ENCODE measurements at regions of chr9 and their contacts with region 1.

Region 1: DNA sequence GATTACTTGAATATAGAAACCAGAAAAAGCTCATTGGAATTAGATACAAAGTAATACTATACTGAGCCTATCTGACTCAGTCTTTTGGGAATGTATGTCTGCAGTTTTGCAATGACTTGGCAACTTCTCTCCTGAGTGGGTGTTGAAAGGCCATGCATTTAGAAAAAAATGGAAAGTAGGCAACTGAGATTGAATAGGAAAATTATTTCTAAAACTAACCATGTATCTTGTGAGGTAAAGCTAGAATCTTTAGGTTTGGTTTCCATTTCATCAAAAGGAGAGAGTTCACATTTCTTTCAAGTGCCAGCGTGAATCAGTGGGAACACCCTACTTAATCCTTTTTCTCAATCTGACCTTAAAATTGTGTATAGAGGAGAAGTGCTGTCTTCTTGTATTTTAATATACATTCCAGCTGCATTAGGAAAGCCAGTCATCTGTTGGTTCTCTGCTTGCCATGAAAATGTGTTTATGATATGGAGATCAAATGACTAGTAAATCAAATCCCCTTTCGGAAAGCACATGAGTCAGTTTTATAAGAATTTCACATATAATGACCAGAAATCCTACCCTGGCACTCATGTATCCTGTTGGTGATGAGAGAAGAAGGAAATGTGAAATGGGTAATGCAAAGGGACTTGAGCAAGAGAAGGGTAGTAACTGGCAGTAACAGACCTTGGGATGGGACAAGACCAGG is 30.4 kb downstream of the NFX1 start:
- DNase-seq: peak; percentile 59 to 81
- ATAC-seq: peak; percentile 90 to 91
- H3K4me3 ChIP-seq: no peak overlapping the region
- H3K27ac ChIP-seq: peak overlapping the region; percentile 80 to 87
- H3K4me1 ChIP-seq: peaks cover 33% of the 10 kb centered on the region
- CTCF ChIP-seq: no peak
- EP300 ChIP-seq: peak in 1 of 2 experiments; percentile 44; a peak in 1 of 5 replicates
- POLR2A ChIP-seq: no peak
- RAD21 ChIP-seq: no peak; a peak in 1 of 5 replicates

Region 2: DNA sequence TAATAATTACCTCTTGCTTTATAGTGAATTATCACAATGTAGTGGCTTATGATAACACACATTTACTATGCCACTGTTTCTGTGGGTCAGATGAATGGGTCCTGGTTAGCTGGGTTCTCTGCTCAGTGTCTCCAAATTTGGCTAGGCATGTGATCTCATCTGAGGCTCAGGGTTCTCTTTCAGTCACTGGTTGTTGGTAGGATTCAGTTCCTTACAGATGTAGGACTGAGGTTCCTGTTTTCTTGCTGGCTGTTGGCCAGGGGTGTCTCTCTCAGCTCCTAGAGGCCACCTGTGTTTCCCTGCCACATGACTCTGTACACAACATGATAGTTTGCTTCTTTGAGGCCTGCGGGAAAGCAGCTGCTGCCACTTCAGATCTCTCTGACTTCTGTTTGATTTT is 23.3 kb before region 1 on chr9:
- CTCF ChIA-PET with region 1: interaction called, 12 read pairs
- POLR2A ChIA-PET with region 1: interaction called, 4 read pairs
- DNase-seq: no peak
- ATAC-seq: 0 out of 6 replicates have a peak, but pooled peaks of 1 of the 2 experiments have one; percentile 34
- H3K4me3 ChIP-seq: no peak overlapping the region
- H3K27ac ChIP-seq: 0 out of 6 replicates have a peak overlapping the region, but pooled peaks of 1 of the 2 experiments have one; percentile 41
- H3K4me1 ChIP-seq: peaks cover 32% of the 10 kb centered on the region
- CTCF ChIP-seq: no peak
- EP300 ChIP-seq: no peak
- POLR2A ChIP-seq: no peak
- RAD21 ChIP-seq: no peak

Measured in A549 (cell line).